Left ventricle myocardium superior (tissue), 1 donor: ENCODE measurements at regions of chr6 and their contacts with region 1.

Region 1: GRCh38 chr6:110815217-110816109 is at the start of gene CDK19:
- DNase-seq: peak; percentile 99
- ATAC-seq: peak; percentile 97
- total RNA-seq, gene CDK19: 11.0 TPM

Region 2: DNA sequence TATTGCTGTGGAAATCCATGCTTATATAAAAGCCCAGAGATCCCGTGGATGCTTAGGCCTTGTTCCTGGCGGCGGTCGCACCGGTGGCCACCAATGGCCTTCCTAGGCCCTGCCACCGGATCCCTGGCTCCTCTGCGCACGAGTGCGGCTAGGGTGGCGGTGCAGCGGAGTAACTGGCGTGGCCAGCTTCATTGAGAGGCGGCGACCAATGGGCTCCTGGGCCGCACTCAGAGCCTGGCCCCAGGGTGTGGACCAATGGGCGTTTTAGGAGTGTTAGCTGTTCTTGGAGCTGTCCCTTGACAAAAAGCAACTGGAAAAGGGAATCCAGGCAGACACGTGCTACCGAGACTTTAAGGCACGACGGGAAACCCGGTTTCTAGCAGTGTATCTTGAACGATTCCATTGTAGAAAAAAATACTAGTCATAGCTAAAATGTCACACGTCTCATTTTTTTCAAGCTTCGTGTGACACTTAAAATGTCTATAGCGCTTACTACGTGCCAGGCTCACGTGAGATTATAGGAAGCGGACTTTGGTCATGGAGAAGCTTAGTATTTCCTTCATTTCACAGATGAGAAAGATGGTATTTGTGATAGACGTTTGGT is 60.8 kb after region 1 on chr6:
- intact Hi-C with region 1: loop called (anchors 5 kb)
- DNase-seq: peak; percentile 92
- ATAC-seq: peak; percentile 84